PC-9 (cell line): ENCODE measurements at regions of chr15 and their contacts with region 1.

Region 1: GRCh38 chr15:100713163-100713867 is 110.9 kb downstream of the ASB7 start:
- DNase-seq: peak; percentile 95 to 99
- H3K4me3 ChIP-seq: peak overlapping the region; percentile 32; the same call in 1 of the 2 replicates
- H3K27ac ChIP-seq: peak overlapping the region; percentile 98
- H3K4me1 ChIP-seq: peaks cover 66% of the 10 kb centered on the region
- H3K27me3 ChIP-seq: no peaks in the 10 kb centered on the region
- CTCF ChIP-seq: no peak

Region 2: DNA sequence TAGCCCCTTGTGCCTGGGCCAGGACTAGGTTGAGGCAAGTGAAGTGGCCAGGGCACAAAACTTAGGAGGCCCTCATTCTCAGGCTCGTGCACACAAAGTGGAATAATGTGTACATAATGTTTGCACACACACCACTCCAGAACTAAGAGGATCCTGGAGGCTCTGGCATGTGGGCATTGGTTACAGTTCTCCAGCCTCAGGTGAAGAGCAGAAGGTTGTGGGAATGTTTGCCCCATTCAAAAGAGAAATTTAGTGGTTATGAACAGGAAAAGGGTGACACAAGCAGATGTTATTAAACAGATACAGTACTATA is 79.6 kb before region 1 on chr15:
- CTCF ChIA-PET with region 1: no interaction called
- POLR2A ChIA-PET with region 1: no interaction called
- intact Hi-C with region 1: loop called (anchors 2 kb)
- DNase-seq: no peak
- H3K4me3 ChIP-seq: no peak overlapping the region
- H3K27ac ChIP-seq: no peak overlapping the region
- H3K4me1 ChIP-seq: peaks cover 9% of the 10 kb centered on the region; the same call in 1 of the 2 replicates
- H3K27me3 ChIP-seq: no peaks in the 10 kb centered on the region
- CTCF ChIP-seq: no peak

Region 3: DNA sequence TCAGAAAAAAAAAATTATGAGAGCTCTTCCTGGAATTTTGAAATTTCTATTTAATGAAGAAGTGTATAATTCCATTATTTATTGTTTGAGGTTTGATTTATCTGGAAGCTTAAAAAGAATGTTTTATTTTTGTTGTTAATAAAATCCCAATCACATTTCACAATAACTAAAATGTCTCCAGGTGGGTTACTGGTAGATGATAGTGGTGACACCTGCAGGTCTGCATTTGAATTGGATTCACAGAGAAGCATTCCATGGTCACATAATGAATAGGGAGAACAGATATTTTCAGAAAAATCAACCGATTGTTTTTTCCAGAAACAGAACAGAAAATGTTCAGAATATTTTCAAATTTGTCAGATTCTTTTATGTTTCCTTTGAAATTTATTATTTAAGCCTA is 62.6 kb before region 1 on chr15:
- CTCF ChIA-PET with region 1: no interaction called
- POLR2A ChIA-PET with region 1: no interaction called
- intact Hi-C with region 1: no loop called
- DNase-seq: no peak
- H3K4me3 ChIP-seq: no peak overlapping the region
- H3K27ac ChIP-seq: no peak overlapping the region
- H3K4me1 ChIP-seq: no peaks in the 10 kb centered on the region
- H3K27me3 ChIP-seq: no peaks in the 10 kb centered on the region
- CTCF ChIP-seq: peak; percentile 58

Region 4: DNA sequence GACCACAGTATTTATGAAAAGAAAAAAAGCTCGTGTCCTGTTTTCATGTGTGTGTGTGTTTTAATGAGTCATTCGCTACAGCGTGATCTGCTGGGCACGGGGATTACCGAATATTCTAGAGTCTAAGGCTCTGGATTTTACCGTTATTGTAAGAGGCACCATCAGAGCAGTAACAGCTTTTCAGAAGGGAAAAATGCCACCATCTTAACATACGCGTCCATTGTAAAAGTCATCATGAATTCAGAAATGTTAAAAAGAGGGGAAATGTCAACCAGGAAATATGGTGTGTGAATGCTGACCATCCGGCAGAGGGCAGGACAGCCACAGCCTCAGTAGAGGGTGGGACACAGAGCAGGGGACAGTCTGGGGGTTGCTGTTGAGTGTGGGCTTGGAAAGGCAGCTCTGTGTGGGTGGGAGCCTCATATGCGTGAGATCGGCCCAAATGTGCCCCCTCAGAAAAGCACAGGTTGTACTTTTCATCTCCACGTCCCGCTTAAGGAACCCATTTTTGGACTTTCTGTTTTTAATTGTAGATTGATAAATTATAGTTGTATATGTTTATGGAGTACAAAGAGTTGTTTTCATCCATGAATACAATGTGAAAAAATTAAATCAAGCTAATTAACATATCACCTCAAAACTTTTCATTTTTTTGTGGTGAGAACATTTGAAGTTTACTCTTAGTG is 41.3 kb before region 1 on chr15:
- CTCF ChIA-PET with region 1: interaction called, 4 read pairs
- POLR2A ChIA-PET with region 1: interaction called, 5 read pairs
- intact Hi-C with region 1: loop called (anchors 2 kb)
- DNase-seq: peak in 1 of 2 experiments; percentile 56
- H3K4me3 ChIP-seq: no peak overlapping the region
- H3K27ac ChIP-seq: peak overlapping the region; percentile 27; the same call in 1 of the 2 replicates
- H3K4me1 ChIP-seq: 0 out of 2 replicates have a peak, but pooled peaks cover 7% of the 10 kb centered on the region
- H3K27me3 ChIP-seq: no peaks in the 10 kb centered on the region
- CTCF ChIP-seq: peak; percentile 68

Region 5: GRCh38 chr15:100733101-100733788 is 19.9 kb after region 1 on chr15:
- CTCF ChIA-PET with region 1: no interaction called
- POLR2A ChIA-PET with region 1: no interaction called
- intact Hi-C with region 1: loop called (anchors 1 kb)
- DNase-seq: peak; percentile 65 to 88
- H3K4me3 ChIP-seq: 0 out of 2 replicates have a peak overlapping the region, but pooled peaks have one; percentile 15
- H3K27ac ChIP-seq: peak overlapping the region; percentile 92
- H3K4me1 ChIP-seq: peaks cover 33% of the 10 kb centered on the region
- H3K27me3 ChIP-seq: no peaks in the 10 kb centered on the region
- CTCF ChIP-seq: no peak

Region 6: GRCh38 chr15:100759698-100760356 is 46.5 kb after region 1 on chr15:
- CTCF ChIA-PET with region 1: no interaction called
- POLR2A ChIA-PET with region 1: interaction called, 3 read pairs
- intact Hi-C with region 1: loop called (anchors 2 kb)
- DNase-seq: peak; percentile 67 to 88
- H3K4me3 ChIP-seq: no peak overlapping the region
- H3K27ac ChIP-seq: peak overlapping the region; percentile 73
- H3K4me1 ChIP-seq: peaks cover 43% of the 10 kb centered on the region
- H3K27me3 ChIP-seq: no peaks in the 10 kb centered on the region
- CTCF ChIP-seq: no peak

Region 7: GRCh38 chr15:100849252-100850171 is 136.2 kb after region 1 on chr15:
- CTCF ChIA-PET with region 1: no interaction called
- POLR2A ChIA-PET with region 1: interaction called, 17 read pairs
- intact Hi-C with region 1: loop called (anchors 2 kb)
- DNase-seq: peak; percentile 75 to 88
- H3K4me3 ChIP-seq: peak overlapping the region; percentile 96
- H3K27ac ChIP-seq: peak overlapping the region; percentile 99
- H3K4me1 ChIP-seq: peaks cover 45% of the 10 kb centered on the region
- H3K27me3 ChIP-seq: no peaks in the 10 kb centered on the region
- CTCF ChIP-seq: peak; percentile 56; the same call in 1 of the 2 replicates

Region 8: GRCh38 chr15:100879464-100880138 is 166.3 kb after region 1 on chr15 and contains the start of gene ALDH1A3:
- CTCF ChIA-PET with region 1: interaction called, 12 read pairs
- POLR2A ChIA-PET with region 1: interaction called, 11 read pairs
- intact Hi-C with region 1: loop called (anchors 1 kb)
- DNase-seq: peak; percentile 70 to 90
- H3K4me3 ChIP-seq: peak within 1 kb of the TSS; percentile 94
- H3K27ac ChIP-seq: peak within 1 kb of the TSS; percentile 75
- H3K4me1 ChIP-seq: peaks cover 29% of the 10 kb centered on the region
- H3K27me3 ChIP-seq: no peaks in the 10 kb centered on the region
- CTCF ChIP-seq: no peak
- total RNA-seq, gene ALDH1A3: 462 and 469 TPM in 2 replicates

Region 9: GRCh38 chr15:101326462-101327135 is 613.3 kb after region 1 on chr15:
- CTCF ChIA-PET with region 1: no interaction called
- POLR2A ChIA-PET with region 1: no interaction called
- intact Hi-C with region 1: no loop called
- DNase-seq: no peak
- H3K4me3 ChIP-seq: no peak overlapping the region
- H3K27ac ChIP-seq: no peak overlapping the region
- H3K4me1 ChIP-seq: no peaks in the 10 kb centered on the region
- H3K27me3 ChIP-seq: no peaks in the 10 kb centered on the region
- CTCF ChIP-seq: no peak